CD4-positive, alpha-beta memory T cell (primary cell): ENCODE measurements at regions of chr5 and their contacts with region 1.

Region 1: GRCh38 chr5:95961617-95962474 is at the start of gene ELL2:
- DNase-seq: peak; percentile 92 to 99 (median 94)
- H3K4me3 ChIP-seq: peak within 1 kb of the TSS; percentile 70 to 81
- H3K4me3 Mint-ChIP-seq: peak within 1 kb of the TSS; percentile 94 to 98 (median 96)
- H3K27ac ChIP-seq: peak within 1 kb of the TSS; percentile 83
- H3K27ac Mint-ChIP-seq: peak within 1 kb of the TSS; percentile 98 to 99 (median 99)
- H3K4me1 ChIP-seq: peaks cover 29% of the 10 kb centered on the region
- H3K4me1 Mint-ChIP-seq: peaks cover 24 to 47% (median 38%) of the 10 kb centered on the region in 4 donors
- H3K27me3 ChIP-seq: no peaks in the 10 kb centered on the region
- H3K27me3 Mint-ChIP-seq: peaks cover 0 to 3% of the 10 kb centered on the region in 2 donors
- total RNA-seq, gene ELL2: 14.0 to 15.6 TPM

Region 2: DNA sequence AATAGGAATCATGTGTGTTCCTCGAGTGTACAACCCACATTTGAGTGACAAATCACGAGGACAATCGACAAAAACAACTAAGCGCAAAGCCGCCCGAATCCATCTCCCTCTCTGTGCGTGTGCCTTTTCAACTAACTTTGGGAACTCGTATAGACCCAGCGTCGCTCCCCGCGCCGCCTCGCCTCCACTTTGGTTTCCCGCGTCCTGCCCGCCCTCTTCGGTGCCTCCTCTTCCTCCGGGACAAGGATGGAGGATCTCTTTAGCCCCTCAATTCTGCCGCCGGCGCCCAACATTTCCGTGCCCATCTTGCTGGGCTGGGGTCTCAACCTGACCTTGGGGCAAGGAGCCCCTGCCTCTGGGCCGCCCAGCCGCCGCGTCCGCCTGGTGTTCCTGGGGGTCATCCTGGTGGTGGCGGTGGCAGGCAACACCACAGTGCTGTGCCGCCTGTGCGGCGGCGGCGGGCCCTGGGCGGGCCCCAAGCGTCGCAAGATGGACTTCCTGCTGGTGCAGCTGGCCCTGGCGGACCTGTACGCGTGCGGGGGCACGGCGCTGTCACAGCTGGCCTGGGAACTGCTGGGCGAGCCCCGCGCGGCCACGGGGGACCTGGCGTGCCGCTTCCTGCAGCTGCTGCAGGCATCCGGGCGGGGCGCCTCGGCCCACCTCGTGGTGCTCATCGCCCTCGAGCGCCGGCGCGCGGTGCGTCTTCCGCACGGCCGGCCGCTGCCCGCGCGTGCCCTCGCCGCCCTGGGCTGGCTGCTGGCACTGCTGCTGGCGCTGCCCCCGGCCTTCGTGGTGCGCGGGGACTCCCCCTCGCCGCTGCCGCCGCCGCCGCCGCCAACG is 341.6 kb before region 1 on chr5 and contains the start of gene GPR150:
- CTCF ChIA-PET with region 1: no interaction called
- POLR2A ChIA-PET with region 1: interaction called, 3 read pairs
- intact Hi-C with region 1: loop called (anchors 5 kb)
- DNase-seq: peak; percentile 58 to 72 (median 64)
- H3K4me3 ChIP-seq: peak within 1 kb of the TSS; percentile 38 to 73
- H3K4me3 Mint-ChIP-seq: peak within 1 kb of the TSS; percentile 90 to 97 (median 94)
- H3K27ac ChIP-seq: peak within 1 kb of the TSS; percentile 69
- H3K27ac Mint-ChIP-seq: peak within 1 kb of the TSS; percentile 23 to 95 (median 86)
- H3K4me1 ChIP-seq: peaks cover 72% of the 10 kb centered on the region
- H3K4me1 Mint-ChIP-seq: peaks cover 57 to 76% (median 67%) of the 10 kb centered on the region in 4 donors
- H3K27me3 ChIP-seq: no peaks in the 10 kb centered on the region
- H3K27me3 Mint-ChIP-seq: no peaks in the 10 kb centered on the region
- total RNA-seq, gene GPR150: 1.5 to 2.4 TPM

Region 3: GRCh38 chr5:95646554-95647431 is 315.1 kb before region 1 on chr5 and contains the start of gene RFESD:
- CTCF ChIA-PET with region 1: no interaction called
- POLR2A ChIA-PET with region 1: no interaction called
- intact Hi-C with region 1: loop called (anchors 5 kb)
- DNase-seq: peak; percentile 91 to 95 (median 92)
- H3K4me3 ChIP-seq: peak within 1 kb of the TSS; percentile 71 to 94
- H3K4me3 Mint-ChIP-seq: peak within 1 kb of the TSS; percentile 87 to 93 (median 89)
- H3K27ac ChIP-seq: peak within 1 kb of the TSS; percentile 84
- H3K27ac Mint-ChIP-seq: peak within 1 kb of the TSS; percentile 57 to 94 (median 93)
- H3K4me1 ChIP-seq: peaks cover 31% of the 10 kb centered on the region
- H3K4me1 Mint-ChIP-seq: peaks cover 20 to 42% (median 26%) of the 10 kb centered on the region in 4 donors
- H3K27me3 ChIP-seq: no peaks in the 10 kb centered on the region
- H3K27me3 Mint-ChIP-seq: no peaks in the 10 kb centered on the region
- total RNA-seq, gene RFESD: 9.1 to 9.3 TPM

Region 4: DNA sequence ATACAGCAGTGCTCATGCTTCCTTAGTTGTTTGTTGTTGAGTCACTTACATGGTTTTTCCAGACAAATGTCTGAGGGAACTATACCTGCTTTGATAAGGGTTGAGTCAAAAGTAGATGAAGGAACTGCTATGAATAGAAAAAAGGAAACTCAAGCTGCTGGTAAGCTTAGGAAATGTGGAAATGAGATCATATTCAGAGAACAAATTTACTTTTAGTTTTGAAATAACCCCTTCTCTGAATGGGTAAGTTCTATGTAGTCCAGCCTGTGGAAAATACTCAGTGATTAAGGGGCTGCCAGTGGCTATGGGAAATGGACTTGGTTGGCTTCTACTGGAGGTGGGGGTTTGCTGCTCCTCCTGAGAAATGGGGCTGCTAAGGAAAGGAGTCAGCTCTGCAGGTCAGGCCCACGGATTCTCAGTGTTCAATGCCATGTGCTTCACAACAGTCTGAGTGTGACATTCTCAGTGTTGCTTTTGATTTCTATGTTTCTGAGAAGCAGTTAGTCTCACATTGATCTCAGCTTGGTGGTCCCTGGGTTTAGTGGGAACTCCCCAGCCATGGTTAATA is 91.7 kb before region 1 on chr5:
- CTCF ChIA-PET with region 1: interaction called, 4 read pairs
- POLR2A ChIA-PET with region 1: interaction called, 19 read pairs
- intact Hi-C with region 1: loop called (anchors 2 kb)
- DNase-seq: no peak
- H3K4me3 ChIP-seq: no peak overlapping the region
- H3K4me3 Mint-ChIP-seq: peak overlapping the region in 7 of 8 donors; percentile 13 to 61 (median 53)
- H3K27ac ChIP-seq: no peak overlapping the region
- H3K27ac Mint-ChIP-seq: peak overlapping the region; percentile 41 to 81 (median 65)
- H3K4me1 ChIP-seq: peaks cover 34% of the 10 kb centered on the region
- H3K4me1 Mint-ChIP-seq: peaks cover 24 to 47% (median 33%) of the 10 kb centered on the region in 4 donors
- H3K27me3 ChIP-seq: no peaks in the 10 kb centered on the region
- H3K27me3 Mint-ChIP-seq: no peaks in the 10 kb centered on the region

Region 5: GRCh38 chr5:96054311-96055030 is 92.6 kb after region 1 on chr5:
- CTCF ChIA-PET with region 1: no interaction called
- POLR2A ChIA-PET with region 1: no interaction called
- intact Hi-C with region 1: no loop called
- DNase-seq: no peak
- H3K4me3 ChIP-seq: no peak overlapping the region
- H3K4me3 Mint-ChIP-seq: no peak overlapping the region
- H3K27ac ChIP-seq: no peak overlapping the region
- H3K27ac Mint-ChIP-seq: no peak overlapping the region
- H3K4me1 ChIP-seq: no peaks in the 10 kb centered on the region
- H3K4me1 Mint-ChIP-seq: peaks cover 0 to 2% (median 0%) of the 10 kb centered on the region in 4 donors
- H3K27me3 ChIP-seq: no peaks in the 10 kb centered on the region
- H3K27me3 Mint-ChIP-seq: peaks cover 0 to 2% of the 10 kb centered on the region in 2 donors

Region 6: DNA sequence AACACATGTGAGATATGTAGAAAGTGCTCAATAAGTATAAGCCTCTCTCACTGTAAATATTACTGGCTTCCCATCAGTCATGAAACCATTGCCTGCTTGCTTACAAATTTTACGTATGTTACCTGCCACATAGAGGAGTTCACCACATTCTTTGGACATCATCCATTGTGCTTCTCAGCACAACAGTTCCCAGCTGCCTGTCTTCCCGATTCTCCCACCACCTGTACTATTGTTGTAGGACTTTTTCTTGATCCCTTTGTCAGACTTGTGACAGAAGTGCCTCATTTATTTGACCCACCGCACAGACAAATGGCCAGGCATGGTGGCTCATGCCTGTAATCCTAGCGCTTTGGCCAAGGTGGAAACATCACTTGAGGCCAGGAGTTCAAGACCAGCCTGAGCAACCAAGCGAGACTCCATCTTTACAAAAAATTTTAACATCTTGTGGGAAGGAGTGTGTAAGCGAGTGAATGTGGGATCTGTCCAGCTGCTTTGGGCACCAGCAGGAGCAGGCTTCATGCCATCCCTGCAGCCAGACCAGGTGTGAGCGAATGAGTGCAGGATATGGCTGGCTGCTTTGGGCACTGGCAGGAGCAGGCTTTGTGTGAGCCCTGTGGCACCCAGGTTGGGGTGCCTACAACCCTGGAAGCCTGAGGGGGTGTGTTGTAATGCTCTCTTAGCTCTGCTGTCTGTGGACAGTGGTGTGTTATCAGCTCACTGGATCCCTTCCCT is 139.7 kb after region 1 on chr5:
- CTCF ChIA-PET with region 1: no interaction called
- POLR2A ChIA-PET with region 1: no interaction called
- intact Hi-C with region 1: no loop called
- DNase-seq: no peak
- H3K4me3 ChIP-seq: no peak overlapping the region
- H3K4me3 Mint-ChIP-seq: no peak overlapping the region
- H3K27ac ChIP-seq: no peak overlapping the region
- H3K27ac Mint-ChIP-seq: no peak overlapping the region
- H3K4me1 ChIP-seq: no peaks in the 10 kb centered on the region
- H3K4me1 Mint-ChIP-seq: no peaks in the 10 kb centered on the region
- H3K27me3 ChIP-seq: no peaks in the 10 kb centered on the region
- H3K27me3 Mint-ChIP-seq: no peaks in the 10 kb centered on the region

Region 7: DNA sequence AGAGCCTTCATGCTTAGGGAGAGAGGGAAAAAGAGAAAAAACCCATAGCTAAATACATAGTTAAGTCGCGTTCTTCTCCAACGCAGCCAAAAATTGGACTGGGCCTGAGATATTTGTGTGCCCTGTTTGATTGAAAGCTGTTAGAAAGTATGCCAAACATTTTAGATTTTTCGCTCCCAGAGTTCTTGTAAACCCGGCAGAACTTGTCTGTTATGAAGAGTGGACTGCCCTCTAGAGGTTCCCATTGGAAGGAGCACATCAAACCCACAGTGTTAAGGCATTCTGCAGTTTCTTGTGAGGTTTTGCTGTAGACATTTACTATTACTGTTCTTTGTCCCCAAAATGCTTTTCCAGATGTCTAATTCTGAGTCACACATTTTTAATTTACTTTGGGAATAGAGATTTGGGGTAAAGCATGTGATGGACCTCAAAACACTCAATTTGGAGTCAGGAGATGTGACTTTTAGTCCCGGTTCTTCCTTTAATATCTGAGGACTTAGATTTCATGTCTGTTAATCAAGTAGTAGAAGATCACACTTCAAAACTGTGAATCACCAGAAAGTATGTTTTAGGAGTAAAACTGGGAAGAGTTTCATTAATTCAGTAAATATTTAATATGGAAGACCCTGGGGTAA is 374.6 kb after region 1 on chr5:
- CTCF ChIA-PET with region 1: interaction called, 4 read pairs
- POLR2A ChIA-PET with region 1: interaction called, 3 read pairs
- intact Hi-C with region 1: loop called (anchors 1 kb)
- DNase-seq: peak; percentile 61 to 70 (median 66)
- H3K4me3 ChIP-seq: no peak overlapping the region
- H3K4me3 Mint-ChIP-seq: no peak overlapping the region
- H3K27ac ChIP-seq: no peak overlapping the region
- H3K27ac Mint-ChIP-seq: no peak overlapping the region
- H3K4me1 ChIP-seq: no peaks in the 10 kb centered on the region
- H3K4me1 Mint-ChIP-seq: no peaks in the 10 kb centered on the region
- H3K27me3 ChIP-seq: peaks cover 7% of the 10 kb centered on the region
- H3K27me3 Mint-ChIP-seq: peaks cover 9% of the 10 kb centered on the region in 2 donors

Region 8: DNA sequence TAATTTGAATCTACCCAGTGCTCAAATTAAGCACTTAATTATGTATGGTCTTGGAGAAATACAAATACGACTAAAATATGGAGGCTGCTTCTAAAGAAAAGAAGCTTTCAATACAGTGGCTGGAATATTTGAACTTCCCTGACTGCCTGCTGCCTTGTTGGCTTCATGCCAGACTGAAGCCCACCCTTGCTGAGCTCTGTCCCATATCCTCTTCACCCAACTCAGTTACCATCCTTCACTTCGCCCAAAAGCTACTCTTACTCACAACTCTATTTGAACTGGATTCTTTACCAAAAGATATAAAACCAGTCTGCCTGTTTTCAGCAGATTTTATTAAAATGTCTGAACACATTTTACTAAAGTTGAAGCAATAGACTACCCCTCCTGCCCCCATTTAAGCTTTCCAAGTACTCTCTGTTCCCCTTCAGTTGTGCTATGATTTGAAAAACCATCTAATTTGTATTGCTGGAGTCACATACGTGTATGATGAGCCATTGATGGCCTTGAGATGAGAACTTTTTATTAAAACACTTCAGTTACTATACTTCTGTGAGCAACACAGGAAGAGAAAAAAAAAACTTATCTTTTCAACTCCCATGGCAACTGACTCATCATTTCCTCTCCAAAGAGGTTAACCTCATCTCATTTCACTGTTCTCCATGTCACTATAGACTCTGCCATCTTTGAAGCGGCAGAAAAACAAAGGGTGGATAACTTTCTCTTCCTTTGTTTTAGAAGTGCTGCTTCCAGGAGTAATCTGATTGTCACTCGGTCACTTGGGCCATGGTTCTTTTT is 575.3 kb after region 1 on chr5:
- CTCF ChIA-PET with region 1: no interaction called
- POLR2A ChIA-PET with region 1: no interaction called
- intact Hi-C with region 1: loop called (anchors 5 kb)
- DNase-seq: peak; percentile 48 to 83 (median 75)
- H3K4me3 ChIP-seq: peak overlapping the region in 1 of 2 donors; percentile 1
- H3K4me3 Mint-ChIP-seq: peak overlapping the region; percentile 18 to 93 (median 76)
- H3K27ac ChIP-seq: peak overlapping the region; percentile 38
- H3K27ac Mint-ChIP-seq: peak overlapping the region; percentile 83 to 100 (median 94)
- H3K4me1 ChIP-seq: peaks cover 30% of the 10 kb centered on the region
- H3K4me1 Mint-ChIP-seq: peaks cover 23 to 41% (median 30%) of the 10 kb centered on the region in 4 donors
- H3K27me3 ChIP-seq: no peaks in the 10 kb centered on the region
- H3K27me3 Mint-ChIP-seq: no peaks in the 10 kb centered on the region

Region 9: GRCh38 chr5:97183100-97183929 is 1221.5 kb after region 1 on chr5 and contains the start of gene RIOK2:
- CTCF ChIA-PET with region 1: no interaction called
- POLR2A ChIA-PET with region 1: no interaction called
- intact Hi-C with region 1: loop called (anchors 1 kb)
- DNase-seq: peak; percentile 91 to 94 (median 92)
- H3K4me3 ChIP-seq: peak within 1 kb of the TSS; percentile 77 to 87
- H3K4me3 Mint-ChIP-seq: peak within 1 kb of the TSS; percentile 94 to 99 (median 97)
- H3K27ac ChIP-seq: peak within 1 kb of the TSS; percentile 95
- H3K27ac Mint-ChIP-seq: peak within 1 kb of the TSS; percentile 99 to 100 (median 100)
- H3K4me1 ChIP-seq: peaks cover 29% of the 10 kb centered on the region
- H3K4me1 Mint-ChIP-seq: peaks cover 23 to 50% (median 38%) of the 10 kb centered on the region in 4 donors
- H3K27me3 ChIP-seq: no peaks in the 10 kb centered on the region
- H3K27me3 Mint-ChIP-seq: no peaks in the 10 kb centered on the region
- total RNA-seq, gene RIOK2: 38.2 to 40.8 TPM